Transverse colon (tissue), 4 donors: ENCODE measurements at regions of chr3 and their contacts with region 1.

Region 1: GRCh38 chr3:13341229-13341905 is 78.8 kb downstream of the NUP210 start:
- DNase-seq: no peak
- H3K4me3 ChIP-seq: no peak overlapping the region
- H3K27ac ChIP-seq: no peak overlapping the region
- H3K4me1 ChIP-seq: no peaks in the 10 kb centered on the region
- H3K27me3 ChIP-seq: no peaks in the 10 kb centered on the region
- CTCF ChIP-seq: no peak
- EP300 ChIP-seq: no peak
- POLR2A ChIP-seq: no peak

Region 2: GRCh38 chr3:13370609-13371008 is 29.2 kb after region 1 on chr3:
- in situ Hi-C with region 1: no loop called
- intact Hi-C with region 1: loop called (anchors 1 kb)
- DNase-seq: no peak
- H3K4me3 ChIP-seq: no peak overlapping the region
- H3K27ac ChIP-seq: no peak overlapping the region
- H3K4me1 ChIP-seq: no peaks in the 10 kb centered on the region
- H3K27me3 ChIP-seq: no peaks in the 10 kb centered on the region
- CTCF ChIP-seq: no peak
- EP300 ChIP-seq: no peak
- POLR2A ChIP-seq: no peak

Region 3: GRCh38 chr3:13452490-13453335 is 111.3 kb after region 1 on chr3:
- in situ Hi-C with region 1: no loop called
- intact Hi-C with region 1: no loop called
- DNase-seq: peak; percentile 24
- H3K4me3 ChIP-seq: peak overlapping the region in 3 of 4 donors; percentile 41 to 63 (median 46)
- H3K27ac ChIP-seq: peak overlapping the region; percentile 81 to 90 (median 88)
- H3K4me1 ChIP-seq: peaks cover 0 to 12% (median 9%) of the 10 kb centered on the region in 4 donors
- H3K27me3 ChIP-seq: no peaks in the 10 kb centered on the region
- CTCF ChIP-seq: peak; percentile 57 to 76 (median 61)
- EP300 ChIP-seq: no peak
- POLR2A ChIP-seq: no peak